ENCODE measurements at regions of chr13 and their contacts with region 1.

Region 1: GRCh38 chr13:90039516-90039915 is 1308.0 kb upstream of the MIR17HG start:
- DNase-seq: no peak
- H3K4me3 ChIP-seq: no peak overlapping the region
- H3K27ac ChIP-seq: no peak overlapping the region
- H3K4me1 ChIP-seq: no peaks in the 10 kb centered on the region
- H3K27me3 ChIP-seq: no peaks in the 10 kb centered on the region
- CTCF ChIP-seq: no peak

Region 2: GRCh38 chr13:89982407-89983095 is 57.0 kb before region 1 on chr13:
- CTCF ChIA-PET with region 1: no interaction called
- POLR2A ChIA-PET with region 1: interaction called, 10 read pairs
- intact Hi-C with region 1: no loop called
- DNase-seq: no peak
- H3K4me3 ChIP-seq: no peak overlapping the region
- H3K27ac ChIP-seq: no peak overlapping the region
- H3K4me1 ChIP-seq: no peaks in the 10 kb centered on the region
- H3K27me3 ChIP-seq: no peaks in the 10 kb centered on the region
- CTCF ChIP-seq: no peak

Measured in PC-9 (cell line).